SK-N-SH (cell line): ENCODE measurements at regions of chr17 and their contacts with region 1.

Region 1: DNA sequence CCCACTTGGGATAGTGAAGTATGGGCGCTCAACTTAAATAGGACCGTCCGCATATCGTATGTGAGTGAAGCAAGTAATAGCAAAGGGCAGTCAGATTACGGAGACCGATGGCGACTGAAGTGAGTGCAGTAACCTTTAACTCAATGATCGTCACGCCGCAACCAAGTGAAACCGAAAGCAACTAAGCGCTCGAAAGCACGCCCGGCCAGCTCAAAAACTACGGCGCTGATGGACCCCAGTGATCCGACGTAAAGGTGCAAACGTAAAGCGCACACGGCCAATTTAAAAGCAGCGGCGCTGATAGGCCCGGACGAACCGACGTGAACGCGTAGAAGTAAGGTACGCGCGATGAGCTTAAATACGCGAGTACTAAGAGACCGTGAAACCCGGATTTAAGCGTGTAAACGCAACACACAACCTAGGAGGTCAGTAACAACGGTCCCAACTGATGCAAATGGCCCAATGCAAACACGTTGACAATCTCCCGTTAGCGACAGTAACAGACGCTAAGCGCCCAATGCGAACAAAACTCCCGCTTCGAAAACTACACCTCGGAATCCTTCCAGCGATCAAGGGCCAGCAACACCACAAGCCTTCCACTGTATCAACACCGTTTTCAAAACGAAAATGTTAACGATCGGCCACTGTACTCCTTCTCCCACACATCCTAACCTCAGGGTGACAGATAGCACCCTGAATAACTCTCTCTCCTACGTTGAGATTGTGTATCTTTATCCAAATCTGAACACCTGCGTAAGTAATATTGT is 37.9 kb upstream of the ARL4D start:
- DNase-seq: peak; percentile 78
- H3K4me3 ChIP-seq: peak overlapping the region; percentile 56 to 59
- H3K27ac ChIP-seq: peak overlapping the region; percentile 91 to 98
- H3K4me1 ChIP-seq: peaks cover 9 to 16% of the 10 kb centered on the region in 2 experiments; a peak in 3 of 4 replicates
- H3K27me3 ChIP-seq: no peaks in the 10 kb centered on the region
- CTCF ChIP-seq: no peak
- EP300 ChIP-seq: peak; percentile 13 to 58; a peak in 2 of 4 replicates
- RAD21 ChIP-seq: no peak

Region 2: GRCh38 chr17:42997984-42998938 is 362.7 kb before region 1 on chr17 and contains the start of gene RPL27:
- CTCF ChIA-PET with region 1: no interaction called
- POLR2A ChIA-PET with region 1: interaction called, 12 read pairs
- DNase-seq: peak; percentile 88
- H3K4me3 ChIP-seq: peak within 1 kb of the TSS; percentile 85 to 87
- H3K27ac ChIP-seq: peak within 1 kb of the TSS; percentile 87 to 90
- H3K4me1 ChIP-seq: peaks cover 6 to 11% of the 10 kb centered on the region in 2 experiments; a peak in 2 of 4 replicates
- H3K27me3 ChIP-seq: no peaks in the 10 kb centered on the region
- CTCF ChIP-seq: peak; percentile 77
- EP300 ChIP-seq: peak; percentile 54 to 57; a peak in 2 of 4 replicates
- RAD21 ChIP-seq: peak; percentile 70
- polyA plus RNA-seq, gene RPL27: 4,890 and 6,383 TPM in 2 replicates

Region 3: DNA sequence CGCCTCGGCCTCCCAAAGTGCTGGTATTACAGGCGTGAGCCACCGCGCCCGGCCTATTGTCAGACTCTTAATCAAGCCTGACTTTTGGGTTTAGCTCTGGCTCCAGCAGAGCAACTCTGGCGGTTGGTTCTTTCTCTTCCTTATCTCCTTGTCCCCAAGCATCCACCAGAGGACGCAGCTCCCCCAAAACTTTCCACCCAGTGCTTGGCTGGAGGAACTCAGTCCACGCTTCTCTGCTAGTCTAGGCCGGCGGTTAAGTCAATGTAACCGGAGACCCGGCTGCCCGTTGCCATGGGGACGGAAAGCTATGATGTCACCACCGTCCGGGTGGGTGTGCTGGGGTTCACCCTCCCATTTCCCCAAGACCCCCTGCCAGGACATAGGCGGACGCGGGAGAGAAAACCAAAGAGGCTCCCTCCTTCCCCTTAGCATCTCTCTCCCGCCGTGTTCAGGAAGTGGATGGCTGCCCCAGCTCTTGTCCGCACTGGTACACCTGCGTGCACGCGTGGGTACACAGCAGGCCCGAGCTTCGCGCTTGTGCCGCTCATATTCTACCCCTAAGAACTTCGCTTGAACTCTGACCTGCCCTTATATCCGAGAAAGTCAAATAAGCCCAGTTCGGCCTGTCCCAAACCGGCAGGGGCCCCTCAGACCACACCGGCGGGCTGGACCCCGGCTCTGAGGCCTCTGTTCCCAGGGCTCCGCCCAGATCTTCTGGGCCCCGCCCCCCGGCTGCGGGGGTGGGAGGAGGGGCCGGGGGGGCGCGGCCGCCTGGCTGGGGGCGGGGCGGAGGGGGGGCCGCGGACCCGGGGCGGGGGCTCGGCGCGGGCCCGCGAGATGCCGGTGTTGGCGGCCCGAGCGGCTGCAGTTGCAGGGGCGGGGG is 336.3 kb before region 1 on chr17 and contains the start of gene RND2:
- CTCF ChIA-PET with region 1: no interaction called
- POLR2A ChIA-PET with region 1: interaction called, 13 read pairs
- DNase-seq: peak; percentile 98
- H3K4me3 ChIP-seq: peak within 1 kb of the TSS; percentile 63 to 81
- H3K27ac ChIP-seq: peak within 1 kb of the TSS; percentile 68 to 86
- H3K4me1 ChIP-seq: peaks cover 0 to 13% of the 10 kb centered on the region in 2 experiments; a peak in 1 of 4 replicates
- H3K27me3 ChIP-seq: no peaks in the 10 kb centered on the region
- CTCF ChIP-seq: peak; percentile 81
- EP300 ChIP-seq: no peak
- RAD21 ChIP-seq: peak; percentile 85
- polyA plus RNA-seq, gene RND2: 8.9 and 10.5 TPM in 2 replicates

Region 4: GRCh38 chr17:43211480-43212402 is 149.2 kb before region 1 on chr17 and contains the start of gene TMEM106A:
- CTCF ChIA-PET with region 1: no interaction called
- POLR2A ChIA-PET with region 1: no interaction called
- DNase-seq: no peak
- H3K4me3 ChIP-seq: no peak within 1 kb of the TSS
- H3K27ac ChIP-seq: no peak within 1 kb of the TSS
- H3K4me1 ChIP-seq: no peaks in the 10 kb centered on the region
- H3K27me3 ChIP-seq: no peaks in the 10 kb centered on the region
- CTCF ChIP-seq: no peak
- EP300 ChIP-seq: no peak
- RAD21 ChIP-seq: no peak
- polyA plus RNA-seq, gene TMEM106A: 0.03 and 0.12 TPM in 2 replicates

Region 5: DNA sequence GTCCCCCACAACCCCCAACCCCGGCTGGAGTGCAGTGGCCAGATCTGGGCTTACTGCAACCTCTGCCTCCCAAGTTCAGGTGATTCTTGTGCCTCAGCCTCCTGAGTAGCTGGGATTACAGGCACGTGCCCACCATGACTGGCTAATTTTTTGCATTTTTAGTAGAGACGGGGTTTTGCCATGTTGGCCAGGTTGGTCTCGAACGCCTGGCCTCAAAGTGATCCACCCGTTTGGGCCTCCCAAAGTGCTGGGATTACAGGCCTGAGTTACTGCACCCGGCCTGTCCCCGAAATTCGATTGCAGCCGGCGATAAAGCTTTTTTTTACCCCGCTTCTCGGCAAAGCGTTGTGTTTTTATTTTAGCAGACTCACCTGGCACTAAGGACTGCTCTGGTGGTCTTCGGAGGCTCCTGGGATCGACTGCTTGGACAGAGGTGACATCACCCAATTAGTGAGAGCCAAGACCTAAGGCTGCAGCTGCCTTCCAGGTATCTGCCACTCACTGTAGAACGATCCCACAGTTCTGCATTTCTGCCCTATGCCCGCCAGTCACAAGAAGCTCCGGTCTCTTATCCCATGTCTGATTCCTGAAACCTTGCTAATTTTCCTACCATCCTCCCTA is 44.3 kb before region 1 on chr17:
- CTCF ChIA-PET with region 1: interaction called, 4 read pairs
- POLR2A ChIA-PET with region 1: interaction called, 48 read pairs
- DNase-seq: no peak
- H3K4me3 ChIP-seq: no peak overlapping the region
- H3K27ac ChIP-seq: no peak overlapping the region
- H3K4me1 ChIP-seq: no peaks in the 10 kb centered on the region; a peak in 1 of 4 replicates
- H3K27me3 ChIP-seq: no peaks in the 10 kb centered on the region
- CTCF ChIP-seq: no peak
- EP300 ChIP-seq: no peak
- RAD21 ChIP-seq: no peak

Region 6: GRCh38 chr17:43338886-43339516 is 21.9 kb before region 1 on chr17:
- CTCF ChIA-PET with region 1: interaction called, 14 read pairs
- POLR2A ChIA-PET with region 1: interaction called, 16 read pairs
- DNase-seq: no peak
- H3K4me3 ChIP-seq: no peak overlapping the region
- H3K27ac ChIP-seq: no peak overlapping the region
- H3K4me1 ChIP-seq: peaks cover 4 to 11% of the 10 kb centered on the region in 2 experiments; a peak in 2 of 4 replicates
- H3K27me3 ChIP-seq: no peaks in the 10 kb centered on the region
- CTCF ChIP-seq: peak; percentile 67
- EP300 ChIP-seq: no peak
- RAD21 ChIP-seq: peak; percentile 78

Region 7: DNA sequence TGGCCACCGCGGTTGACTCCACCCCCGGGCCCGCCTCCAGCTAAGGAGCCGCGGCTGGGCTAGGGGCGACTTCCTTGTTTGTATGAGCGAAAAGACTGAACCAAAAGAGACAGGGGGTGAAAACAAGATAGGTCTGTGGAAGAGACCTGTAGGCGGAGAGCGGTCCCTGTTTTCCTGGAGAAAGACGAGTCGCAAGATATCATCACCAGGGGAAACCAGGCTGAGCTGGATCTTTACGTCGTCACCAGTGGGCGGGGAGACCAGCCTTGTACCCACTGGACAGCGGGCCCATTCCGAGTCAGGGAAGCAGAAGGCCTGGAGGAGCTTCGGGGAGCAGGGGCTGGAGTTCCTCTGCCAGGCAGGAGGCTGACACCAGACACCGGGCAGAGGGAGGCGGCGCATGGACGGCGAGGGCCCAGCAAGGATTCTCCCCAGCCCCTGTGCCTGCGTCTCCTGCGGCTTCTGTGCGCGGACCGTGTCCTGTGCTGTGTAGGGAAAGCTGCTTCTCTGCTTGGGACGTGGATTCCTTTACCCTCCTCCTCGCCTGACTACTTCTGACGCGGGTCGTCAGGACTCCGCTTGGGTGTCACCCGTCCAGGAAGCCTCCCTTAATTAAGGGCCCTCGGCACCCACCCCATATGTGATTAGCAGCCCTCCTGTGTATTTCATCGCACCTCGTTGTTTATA is 27.6 kb after region 1 on chr17:
- CTCF ChIA-PET with region 1: interaction called, 5 read pairs
- POLR2A ChIA-PET with region 1: interaction called, 54 read pairs
- DNase-seq: peak; percentile 84
- H3K4me3 ChIP-seq: peak overlapping the region; percentile 58 to 77
- H3K27ac ChIP-seq: peak overlapping the region; percentile 91 to 99
- H3K4me1 ChIP-seq: no peaks in the 10 kb centered on the region; a peak in 1 of 4 replicates
- H3K27me3 ChIP-seq: no peaks in the 10 kb centered on the region
- CTCF ChIP-seq: no peak
- EP300 ChIP-seq: no peak
- RAD21 ChIP-seq: no peak

Region 8: DNA sequence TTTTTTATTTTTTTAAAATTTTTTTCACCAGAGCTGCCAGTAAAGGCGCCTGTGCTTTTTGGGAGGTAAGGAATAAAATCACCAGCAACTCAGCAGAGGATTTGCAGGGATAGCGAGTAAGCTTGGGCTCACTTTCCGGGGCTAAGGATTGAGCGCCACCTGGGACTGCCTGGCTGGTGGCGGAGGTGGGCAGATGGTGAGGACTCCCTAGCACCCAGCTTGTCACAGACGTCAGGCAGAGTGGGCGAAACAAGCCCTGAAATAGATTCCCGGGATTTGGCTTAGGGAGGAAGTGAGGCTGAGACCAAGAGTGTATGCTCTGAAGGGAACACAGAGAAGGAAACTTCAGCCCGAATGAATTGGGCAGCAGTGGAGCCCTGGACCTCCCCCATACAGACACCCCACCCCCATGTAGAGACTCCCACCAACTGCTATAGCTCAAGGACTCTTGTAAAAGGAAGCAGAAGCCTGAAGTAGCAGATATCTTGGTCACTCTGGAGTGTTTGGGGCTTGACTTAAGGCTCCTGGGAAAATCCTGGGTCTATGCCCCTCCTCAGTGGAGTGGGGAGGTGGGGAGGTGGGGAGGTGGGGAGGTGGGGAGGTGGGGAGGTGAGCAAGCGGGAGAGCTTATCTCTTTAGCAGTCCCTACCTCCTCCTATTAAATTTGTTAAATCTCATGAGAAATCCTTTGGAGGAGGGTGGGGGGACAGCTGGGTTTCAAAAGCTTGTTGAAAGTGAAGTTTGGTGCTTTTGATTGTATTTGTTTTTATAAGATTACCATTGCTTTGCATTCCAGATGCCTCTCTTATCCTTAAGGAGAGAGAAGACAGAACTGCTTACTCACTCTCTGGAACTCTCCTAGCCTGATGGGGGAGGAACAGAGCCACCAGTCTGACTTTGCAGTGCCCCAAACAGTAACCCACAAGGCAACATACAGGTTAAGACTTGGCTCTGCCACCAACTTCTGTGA is 46.0 kb after region 1 on chr17:
- CTCF ChIA-PET with region 1: interaction called, 3 read pairs
- POLR2A ChIA-PET with region 1: interaction called, 10 read pairs
- DNase-seq: no peak
- H3K4me3 ChIP-seq: no peak overlapping the region
- H3K27ac ChIP-seq: peak overlapping the region; percentile 12 to 62; a peak in 3 of 4 replicates
- H3K4me1 ChIP-seq: peaks cover 11 to 14% of the 10 kb centered on the region in 2 experiments
- H3K27me3 ChIP-seq: no peaks in the 10 kb centered on the region
- CTCF ChIP-seq: no peak; the same call in 1 of the 2 replicates
- EP300 ChIP-seq: peak in 1 of 2 experiments; percentile 60; a peak in 1 of 4 replicates
- RAD21 ChIP-seq: no peak

Region 9: DNA sequence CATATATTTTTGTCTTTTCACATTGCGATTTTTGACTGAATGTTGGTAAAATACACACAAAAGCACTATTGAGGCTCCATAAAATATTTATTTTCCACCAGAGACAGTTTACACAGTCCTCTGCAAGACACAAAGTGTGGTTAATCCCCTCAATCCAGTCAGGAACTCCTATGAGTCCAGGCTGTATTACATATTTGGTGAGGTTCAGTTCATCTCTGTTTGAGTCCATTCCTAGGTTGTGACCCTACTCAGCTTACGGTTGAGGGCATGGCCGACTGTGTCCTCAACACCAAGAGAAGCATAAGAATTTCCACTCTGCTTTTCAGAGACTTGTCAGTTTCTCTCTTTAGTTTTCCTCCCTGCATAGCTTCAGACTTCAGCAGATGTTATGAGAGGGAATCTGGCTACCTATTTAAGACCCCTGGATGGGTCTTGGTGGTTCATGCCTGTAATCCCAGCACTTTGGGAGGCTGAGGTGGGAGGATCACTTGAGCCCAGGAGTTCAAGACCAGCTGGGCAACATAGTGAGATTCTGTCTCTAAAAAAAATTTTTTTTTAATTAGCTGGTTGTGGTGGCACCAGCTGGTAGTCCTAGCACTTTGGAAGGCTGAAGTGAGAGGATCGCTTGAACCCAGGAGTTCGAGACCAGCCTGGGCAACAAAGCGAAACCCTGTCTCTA is 63.0 kb after region 1 on chr17:
- CTCF ChIA-PET with region 1: no interaction called
- POLR2A ChIA-PET with region 1: no interaction called
- DNase-seq: no peak
- H3K4me3 ChIP-seq: no peak overlapping the region
- H3K27ac ChIP-seq: no peak overlapping the region
- H3K4me1 ChIP-seq: peaks cover 3 to 5% of the 10 kb centered on the region in 2 experiments; a peak in 2 of 4 replicates
- H3K27me3 ChIP-seq: no peaks in the 10 kb centered on the region
- CTCF ChIP-seq: no peak
- EP300 ChIP-seq: no peak
- RAD21 ChIP-seq: no peak